ENCODE measurements at regions of chr12 and their contacts with region 1.

Region 1: DNA sequence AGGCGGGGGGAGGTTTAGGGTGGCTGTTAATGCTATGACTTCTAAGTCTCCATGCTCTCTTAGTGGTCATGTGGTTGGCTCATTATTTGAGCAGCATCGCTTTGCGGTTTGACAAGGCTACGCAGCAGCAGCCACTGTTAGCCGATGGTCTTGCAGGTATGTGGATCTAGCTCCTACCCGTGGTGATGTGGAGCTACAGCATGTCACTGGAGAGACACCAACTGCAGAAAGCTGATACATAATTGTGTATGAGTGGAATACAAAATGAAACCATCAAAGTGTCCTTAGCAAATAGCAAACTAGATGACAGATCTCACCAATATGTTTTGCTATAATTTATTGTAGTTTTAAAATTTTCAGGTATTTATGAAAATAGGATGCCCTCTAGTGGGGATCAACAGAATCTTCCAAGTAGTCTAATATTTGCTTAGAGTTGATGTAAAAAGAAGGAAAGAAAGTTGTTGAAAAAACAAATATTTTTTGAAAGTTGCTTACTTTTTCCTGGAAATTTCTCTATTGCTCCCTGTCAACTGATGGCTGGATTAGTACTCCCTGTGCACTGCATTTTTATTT is 94.9 kb downstream of the NAV3 start:
- DNase-seq: peak; percentile 77 to 95 (median 88)
- H3K4me3 ChIP-seq: no peak overlapping the region
- H3K27ac ChIP-seq: no peak overlapping the region
- H3K4me1 ChIP-seq: peaks cover 0 to 7% of the 10 kb centered on the region in 2 donors
- H3K27me3 ChIP-seq: no peaks in the 10 kb centered on the region
- CTCF ChIP-seq: peak; percentile 78 to 100 (median 97)
- POLR2A ChIP-seq: no peak

Region 2: GRCh38 chr12:77724367-77724957 is 201.2 kb before region 1 on chr12:
- intact Hi-C with region 1: loop called (anchors 2 to 5 kb)
- DNase-seq: peak in 5 of 7 donors; percentile 11 to 32 (median 23)
- H3K4me3 ChIP-seq: no peak overlapping the region
- H3K27ac ChIP-seq: no peak overlapping the region
- H3K4me1 ChIP-seq: no peaks in the 10 kb centered on the region
- H3K27me3 ChIP-seq: no peaks in the 10 kb centered on the region
- CTCF ChIP-seq: peak; percentile 56 to 95 (median 88)
- POLR2A ChIP-seq: no peak

Measured in adrenal gland (tissue), 19 donors.